Panc1 (cell line): ENCODE measurements at regions of chr6 and their contacts with region 1.

Region 1: DNA sequence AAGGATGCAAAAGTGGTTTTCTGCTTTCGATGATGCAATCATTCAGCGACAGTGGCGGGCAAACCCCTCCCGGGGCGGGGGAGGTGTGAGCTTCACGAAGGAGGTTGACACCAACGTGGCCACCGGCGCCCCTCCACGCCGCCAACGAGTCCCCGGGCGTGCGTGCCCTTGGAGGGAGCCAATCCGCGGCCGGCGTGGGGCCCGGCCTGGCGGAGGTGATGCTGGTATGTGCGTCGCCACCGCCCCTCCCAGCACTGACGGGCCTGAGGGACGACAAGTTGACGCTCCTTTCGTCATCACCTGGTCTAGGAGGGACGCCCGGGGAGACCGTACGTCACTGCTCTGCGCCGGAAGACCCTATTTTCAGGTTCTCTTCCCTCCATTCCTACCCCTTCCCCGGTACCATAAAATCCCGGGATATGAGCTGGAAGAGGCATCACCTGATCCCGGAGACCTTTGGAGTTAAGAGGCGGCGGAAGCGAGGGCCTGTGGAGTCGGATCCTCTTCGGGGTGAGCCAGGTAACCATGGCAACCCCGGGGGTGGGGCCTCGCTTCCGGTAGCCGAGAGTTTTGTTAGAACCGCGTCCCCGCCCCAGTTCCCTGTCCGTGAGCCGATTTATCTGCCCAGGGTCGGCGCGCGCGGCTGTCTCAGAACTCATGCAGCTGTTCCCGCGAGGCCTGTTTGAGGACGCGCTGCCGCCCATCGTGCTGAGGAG is at the start of gene DXO:
- DNase-seq: peak; percentile 95
- ATAC-seq: peak; percentile 94
- H3K4me3 ChIP-seq: peak within 1 kb of the TSS; percentile 85 to 94
- H3K27ac ChIP-seq: peak within 1 kb of the TSS; percentile 94
- H3K4me1 ChIP-seq: peaks cover 12% of the 10 kb centered on the region; the same call in 1 of the 2 replicates
- H3K27me3 ChIP-seq: no peaks in the 10 kb centered on the region
- CTCF ChIP-seq: no peak
- total RNA-seq, gene DXO: 38.1 TPM

Region 2: DNA sequence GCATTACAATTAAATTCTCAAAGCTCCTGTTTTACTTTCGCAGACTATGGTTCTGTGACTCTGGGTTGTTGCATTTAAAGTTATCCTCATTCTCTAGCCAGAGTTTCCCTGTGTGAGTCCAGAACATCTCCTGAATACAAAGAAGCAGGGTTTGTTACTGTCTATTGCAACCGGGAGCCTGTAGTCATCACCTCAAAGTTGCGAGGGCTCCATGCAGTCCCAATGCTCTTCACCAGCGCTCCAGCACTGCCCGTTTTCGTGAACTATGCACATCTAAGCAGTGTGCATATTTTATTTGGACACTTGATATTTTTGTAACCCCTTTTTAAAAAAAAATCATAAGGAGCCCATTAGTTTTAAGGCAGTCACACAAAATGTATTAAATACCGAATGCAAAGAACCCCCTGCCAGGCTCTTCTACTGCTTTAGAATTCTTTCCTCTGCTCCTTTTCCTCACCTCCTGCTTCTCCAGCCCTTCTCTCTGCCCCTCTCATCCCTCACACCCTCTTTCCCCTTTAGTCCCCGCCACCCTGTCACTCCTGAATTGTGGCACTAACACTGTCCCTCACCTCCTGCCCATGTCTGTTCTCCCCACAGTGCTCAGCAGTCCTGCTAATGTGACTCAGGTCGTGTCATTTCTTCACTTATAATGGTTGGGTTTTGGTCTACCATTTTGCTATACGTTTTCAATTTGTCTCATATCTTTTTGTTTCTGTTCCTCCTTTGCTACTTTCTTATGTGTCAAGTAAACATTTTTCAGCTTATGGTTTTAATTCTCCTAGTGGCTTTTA is 699.1 kb before region 1 on chr6:
- CTCF ChIA-PET with region 1: no interaction called
- POLR2A ChIA-PET with region 1: no interaction called
- in situ Hi-C with region 1: no loop called
- intact Hi-C with region 1: no loop called
- DNase-seq: no peak
- ATAC-seq: no peak
- H3K4me3 ChIP-seq: peak overlapping the region in 1 of 2 experiments; percentile 68; a peak in 3 of 4 replicates
- H3K27ac ChIP-seq: no peak overlapping the region
- H3K4me1 ChIP-seq: no peaks in the 10 kb centered on the region
- H3K27me3 ChIP-seq: no peaks in the 10 kb centered on the region; the same call in 1 of the 2 replicates
- CTCF ChIP-seq: no peak

Region 3: DNA sequence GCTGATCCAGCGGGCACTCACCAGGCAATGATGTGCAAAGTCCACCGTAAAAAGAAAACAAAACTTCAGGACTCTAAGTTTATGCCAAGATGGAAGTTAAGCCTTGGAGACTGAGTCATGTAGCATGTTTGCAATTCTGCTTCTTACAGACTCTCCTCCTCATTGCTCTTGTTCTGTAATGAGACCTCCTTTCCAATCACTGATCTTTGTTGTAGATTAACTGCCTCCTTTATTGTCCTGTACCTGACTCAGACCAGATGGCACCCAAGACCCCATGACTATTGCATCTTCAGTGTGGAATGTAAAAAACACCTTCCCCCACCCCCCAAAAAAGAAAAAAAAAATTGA is 120.7 kb before region 1 on chr6:
- CTCF ChIA-PET with region 1: no interaction called
- POLR2A ChIA-PET with region 1: interaction called, 16 read pairs
- in situ Hi-C with region 1: no loop called
- intact Hi-C with region 1: no loop called
- DNase-seq: no peak
- ATAC-seq: peak; percentile 24
- H3K4me3 ChIP-seq: peak overlapping the region in 1 of 2 experiments; percentile 9; a peak in 2 of 4 replicates
- H3K27ac ChIP-seq: peak overlapping the region; percentile 71
- H3K4me1 ChIP-seq: peaks cover 5% of the 10 kb centered on the region; the same call in 1 of the 2 replicates
- H3K27me3 ChIP-seq: no peaks in the 10 kb centered on the region
- CTCF ChIP-seq: no peak

Region 4: DNA sequence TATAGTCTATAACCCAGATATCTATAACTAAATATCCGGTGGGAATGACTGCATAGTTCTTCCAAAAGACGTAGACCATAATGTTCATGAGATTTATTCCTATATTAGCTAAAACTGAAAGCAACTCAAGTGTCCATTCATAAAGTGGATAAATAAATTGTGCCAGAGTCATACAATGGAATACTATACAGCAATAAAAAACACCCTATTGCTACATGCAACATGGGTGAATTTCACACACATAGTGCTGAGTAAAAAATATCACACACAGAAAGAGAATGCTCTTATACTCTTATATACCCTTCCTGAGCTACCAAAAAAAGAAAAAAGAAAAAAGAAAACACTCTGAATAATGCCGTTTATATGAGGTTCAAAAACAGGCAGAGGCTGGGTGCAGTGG is 130.1 kb after region 1 on chr6:
- CTCF ChIA-PET with region 1: no interaction called
- POLR2A ChIA-PET with region 1: interaction called, 11 read pairs
- in situ Hi-C with region 1: no loop called
- intact Hi-C with region 1: no loop called
- DNase-seq: no peak
- ATAC-seq: no peak
- H3K4me3 ChIP-seq: no peak overlapping the region
- H3K27ac ChIP-seq: no peak overlapping the region
- H3K4me1 ChIP-seq: no peaks in the 10 kb centered on the region
- H3K27me3 ChIP-seq: peaks cover 4% of the 10 kb centered on the region; the same call in 1 of the 2 replicates
- CTCF ChIP-seq: no peak

Region 5: GRCh38 chr6:32413427-32414047 is 441.4 kb after region 1 on chr6:
- CTCF ChIA-PET with region 1: no interaction called
- POLR2A ChIA-PET with region 1: no interaction called
- in situ Hi-C with region 1: no loop called
- intact Hi-C with region 1: no loop called
- DNase-seq: peak; percentile 69
- ATAC-seq: peak; percentile 82
- H3K4me3 ChIP-seq: no peak overlapping the region
- H3K27ac ChIP-seq: no peak overlapping the region
- H3K4me1 ChIP-seq: peaks cover 3% of the 10 kb centered on the region; the same call in 1 of the 2 replicates
- H3K27me3 ChIP-seq: peaks cover 35% of the 10 kb centered on the region
- CTCF ChIP-seq: peak; percentile 96

Region 6: DNA sequence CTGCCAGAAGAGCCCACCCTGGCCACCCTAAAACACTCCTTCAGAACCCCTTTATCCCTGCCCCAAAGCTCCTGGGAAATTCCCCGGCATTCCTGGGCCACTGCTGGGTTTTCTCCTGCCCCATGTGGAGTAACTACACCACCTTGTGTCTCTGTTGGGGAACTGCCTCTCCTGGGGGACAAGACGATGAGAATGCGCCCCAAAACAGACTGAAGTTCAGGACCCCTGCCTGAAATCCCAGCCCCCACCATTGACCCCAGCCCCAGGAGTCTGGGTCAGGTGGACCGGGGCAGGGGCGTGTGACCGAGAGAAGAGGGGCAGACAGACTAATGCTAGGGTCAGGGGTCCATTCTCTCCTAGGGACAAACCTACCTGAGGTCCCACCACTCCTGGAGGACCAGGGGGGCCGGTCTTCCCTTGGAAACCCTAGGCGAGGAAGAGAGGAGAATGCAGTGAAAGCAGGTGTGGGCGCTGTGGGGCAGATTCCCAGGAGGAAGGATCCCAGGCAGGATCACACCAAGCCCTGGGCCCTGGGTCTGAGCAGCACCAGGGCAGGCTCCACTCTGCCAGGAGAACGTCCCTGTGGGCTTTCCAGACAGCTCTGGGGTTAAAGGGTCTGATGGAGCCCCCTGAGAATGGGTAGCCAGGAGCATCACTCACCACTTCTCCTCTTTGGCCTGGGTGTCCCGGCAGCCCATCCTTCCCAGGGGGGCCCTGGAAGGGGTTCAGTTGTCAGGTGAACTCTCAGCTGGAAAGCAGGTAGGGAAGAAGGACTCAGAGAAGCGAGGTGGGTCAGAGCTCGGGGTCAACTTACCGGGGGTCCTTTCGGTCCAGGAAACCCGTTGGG is 1200.8 kb after region 1 on chr6:
- CTCF ChIA-PET with region 1: no interaction called
- POLR2A ChIA-PET with region 1: interaction called, 19 read pairs
- in situ Hi-C with region 1: no loop called
- intact Hi-C with region 1: no loop called
- DNase-seq: no peak
- ATAC-seq: peak; percentile 79
- H3K4me3 ChIP-seq: no peak overlapping the region
- H3K27ac ChIP-seq: no peak overlapping the region
- H3K4me1 ChIP-seq: peaks cover 6% of the 10 kb centered on the region
- H3K27me3 ChIP-seq: no peaks in the 10 kb centered on the region
- CTCF ChIP-seq: peak; percentile 91

Region 7: GRCh38 chr6:33312409-33313158 is 1340.4 kb after region 1 on chr6:
- CTCF ChIA-PET with region 1: no interaction called
- POLR2A ChIA-PET with region 1: interaction called, 10 read pairs
- in situ Hi-C with region 1: no loop called
- intact Hi-C with region 1: no loop called
- DNase-seq: no peak
- ATAC-seq: peak; percentile 46
- H3K4me3 ChIP-seq: peak overlapping the region; percentile 91 to 92
- H3K27ac ChIP-seq: peak overlapping the region; percentile 99
- H3K4me1 ChIP-seq: peaks cover 26% of the 10 kb centered on the region
- H3K27me3 ChIP-seq: no peaks in the 10 kb centered on the region
- CTCF ChIP-seq: no peak